ENCODE measurements at regions of chr7 and their contacts with region 1.

Region 1: GRCh38 chr7:44606450-44607254 is at the start of gene OGDH:
- DNase-seq: peak; percentile 100
- H3K4me3 Mint-ChIP-seq: peak within 1 kb of the TSS; percentile 82
- H3K27ac Mint-ChIP-seq: peak within 1 kb of the TSS; percentile 98
- H3K4me1 Mint-ChIP-seq: peaks cover 36% of the 10 kb centered on the region
- H3K27me3 Mint-ChIP-seq: no peaks in the 10 kb centered on the region
- total RNA-seq, gene OGDH: 103 to 105 TPM

Region 2: DNA sequence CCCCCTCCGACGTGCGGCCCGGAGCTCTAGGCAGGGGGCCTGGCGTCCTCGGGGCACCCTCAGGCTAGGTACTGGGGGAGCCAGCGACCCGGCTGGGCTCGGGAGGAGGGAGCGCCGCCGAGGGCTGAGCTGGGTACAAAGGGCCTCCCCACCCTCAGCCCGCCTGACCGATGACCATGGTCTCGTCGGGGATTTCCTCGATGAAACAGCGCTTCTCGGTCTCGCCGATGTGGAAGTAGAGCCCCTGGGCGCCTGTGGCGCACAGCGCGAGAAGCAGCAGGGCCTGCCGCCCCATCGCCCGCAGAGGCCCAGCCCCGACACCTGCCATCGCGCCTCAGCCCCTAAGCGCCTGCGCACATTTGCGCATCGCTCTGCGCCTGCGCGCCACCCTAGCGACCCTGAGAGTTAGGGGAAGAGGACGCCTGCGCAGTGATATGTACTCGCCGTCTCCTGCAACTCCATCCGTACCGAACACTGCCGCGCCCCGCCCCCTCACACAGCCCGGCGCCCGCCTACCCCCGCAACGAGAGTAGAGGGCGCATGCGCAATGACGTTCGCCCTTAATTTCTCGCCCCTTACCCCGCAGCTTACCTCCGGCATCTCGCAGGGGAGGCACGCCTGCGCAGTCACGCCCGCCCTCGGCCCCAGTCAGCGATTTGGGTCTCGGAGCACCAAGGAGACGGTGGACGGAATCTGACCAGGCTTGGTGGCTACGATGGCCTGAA is 24.6 kb before region 1 on chr7 and contains the start of gene TMED4:
- CTCF ChIA-PET with region 1: interaction called, 3 read pairs
- POLR2A ChIA-PET with region 1: interaction called, 20 read pairs
- intact Hi-C with region 1: loop called (anchors 1 kb)
- DNase-seq: peak; percentile 100
- H3K4me3 Mint-ChIP-seq: peak within 1 kb of the TSS; percentile 91
- H3K27ac Mint-ChIP-seq: peak within 1 kb of the TSS; percentile 91
- H3K4me1 Mint-ChIP-seq: peaks cover 29% of the 10 kb centered on the region
- H3K27me3 Mint-ChIP-seq: peaks cover 3% of the 10 kb centered on the region
- total RNA-seq, gene TMED4: 74.8 to 79.1 TPM

Region 3: GRCh38 chr7:44622307-44623151 is 15.9 kb after region 1 on chr7:
- CTCF ChIA-PET with region 1: interaction called, 4 read pairs
- POLR2A ChIA-PET with region 1: interaction called, 21 read pairs
- intact Hi-C with region 1: loop called (anchors 1 kb)
- DNase-seq: peak; percentile 74
- H3K4me3 Mint-ChIP-seq: peak overlapping the region; percentile 69
- H3K27ac Mint-ChIP-seq: peak overlapping the region; percentile 93
- H3K4me1 Mint-ChIP-seq: peaks cover 92% of the 10 kb centered on the region
- H3K27me3 Mint-ChIP-seq: no peaks in the 10 kb centered on the region

Region 4: GRCh38 chr7:44633254-44634186 is 26.9 kb after region 1 on chr7:
- CTCF ChIA-PET with region 1: interaction called, 10 read pairs
- POLR2A ChIA-PET with region 1: interaction called, 60 read pairs
- intact Hi-C with region 1: loop called (anchors 1 kb)
- DNase-seq: peak; percentile 84
- H3K4me3 Mint-ChIP-seq: peak overlapping the region; percentile 53
- H3K27ac Mint-ChIP-seq: peak overlapping the region; percentile 96
- H3K4me1 Mint-ChIP-seq: peaks cover 97% of the 10 kb centered on the region
- H3K27me3 Mint-ChIP-seq: no peaks in the 10 kb centered on the region

Region 5: DNA sequence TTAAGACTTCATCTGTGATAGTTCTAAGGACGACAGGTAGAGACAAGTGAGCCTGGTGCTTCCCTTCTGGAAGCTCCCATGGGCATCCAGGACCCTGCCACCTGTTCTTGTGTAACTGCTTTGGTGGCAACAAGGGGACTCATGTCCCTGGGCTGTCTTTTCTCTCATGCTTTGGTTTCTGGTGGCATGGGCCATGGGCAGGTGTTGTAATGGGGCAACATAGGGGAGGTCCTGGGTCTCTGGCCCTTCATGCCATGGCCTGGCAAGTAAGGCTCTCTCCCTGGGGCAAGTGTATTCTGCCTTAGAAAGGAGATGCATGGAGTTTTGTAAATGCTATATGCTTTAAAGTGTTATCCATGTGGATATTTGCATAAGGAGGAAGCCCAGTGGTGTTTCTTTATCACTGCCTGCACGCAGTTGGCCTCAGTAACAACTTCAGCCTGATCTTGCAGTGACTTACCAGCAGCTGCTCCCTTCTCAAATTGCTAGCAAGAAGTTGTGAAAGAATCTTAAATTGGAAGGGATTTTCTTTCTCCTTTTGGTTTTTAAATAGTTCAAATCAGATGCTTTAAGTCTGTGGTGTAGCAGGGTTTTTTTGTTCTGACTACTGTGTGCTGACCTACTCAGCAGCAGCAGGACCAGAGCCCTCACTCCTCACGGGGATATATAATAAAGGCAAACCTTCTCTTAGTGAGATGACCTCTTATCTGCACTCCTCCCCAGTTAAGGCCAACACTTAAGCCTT is 39.7 kb after region 1 on chr7:
- CTCF ChIA-PET with region 1: no interaction called
- POLR2A ChIA-PET with region 1: no interaction called
- intact Hi-C with region 1: no loop called
- DNase-seq: no peak
- H3K4me3 Mint-ChIP-seq: no peak overlapping the region
- H3K27ac Mint-ChIP-seq: no peak overlapping the region
- H3K4me1 Mint-ChIP-seq: peaks cover 17% of the 10 kb centered on the region
- H3K27me3 Mint-ChIP-seq: no peaks in the 10 kb centered on the region

Region 6: DNA sequence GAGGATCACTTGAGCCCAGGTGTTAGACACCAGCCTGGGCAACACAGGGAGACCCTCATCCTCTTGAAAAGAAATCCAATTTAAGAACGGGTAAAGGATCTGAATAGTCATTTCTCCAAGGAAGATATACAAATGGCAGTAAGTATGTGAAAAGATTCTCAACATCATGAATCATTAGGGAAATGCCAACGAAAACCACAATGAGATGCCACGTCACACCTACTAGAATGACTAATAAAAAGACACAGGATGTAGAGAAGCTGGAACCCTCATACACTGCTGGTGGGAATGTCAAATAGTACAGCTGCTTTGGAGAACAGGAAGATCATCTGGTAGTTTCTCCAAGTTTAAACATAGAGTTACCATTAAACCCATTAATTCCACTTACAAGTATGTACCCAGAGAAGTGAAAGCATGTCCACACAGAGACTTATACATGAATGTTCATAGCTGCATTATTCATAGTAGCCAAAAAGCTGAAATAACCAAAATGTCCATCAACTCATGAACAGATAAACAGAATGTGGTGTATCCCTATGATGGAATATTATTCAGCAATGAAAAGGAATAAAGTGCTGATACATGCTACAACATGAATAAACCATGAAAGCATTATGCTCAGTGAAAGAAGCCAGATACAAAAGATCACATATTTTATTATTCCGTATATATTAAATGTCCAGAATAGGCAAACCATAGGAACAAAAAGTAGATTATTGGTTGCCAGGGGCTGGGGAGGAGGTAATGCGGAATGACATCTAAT is 128.9 kb after region 1 on chr7:
- CTCF ChIA-PET with region 1: no interaction called
- POLR2A ChIA-PET with region 1: no interaction called
- intact Hi-C with region 1: loop called (anchors 1 kb)
- DNase-seq: peak; percentile 62
- H3K4me3 Mint-ChIP-seq: peak overlapping the region; percentile 4
- H3K27ac Mint-ChIP-seq: peak overlapping the region; percentile 73
- H3K4me1 Mint-ChIP-seq: peaks cover 19% of the 10 kb centered on the region
- H3K27me3 Mint-ChIP-seq: no peaks in the 10 kb centered on the region

Region 7: DNA sequence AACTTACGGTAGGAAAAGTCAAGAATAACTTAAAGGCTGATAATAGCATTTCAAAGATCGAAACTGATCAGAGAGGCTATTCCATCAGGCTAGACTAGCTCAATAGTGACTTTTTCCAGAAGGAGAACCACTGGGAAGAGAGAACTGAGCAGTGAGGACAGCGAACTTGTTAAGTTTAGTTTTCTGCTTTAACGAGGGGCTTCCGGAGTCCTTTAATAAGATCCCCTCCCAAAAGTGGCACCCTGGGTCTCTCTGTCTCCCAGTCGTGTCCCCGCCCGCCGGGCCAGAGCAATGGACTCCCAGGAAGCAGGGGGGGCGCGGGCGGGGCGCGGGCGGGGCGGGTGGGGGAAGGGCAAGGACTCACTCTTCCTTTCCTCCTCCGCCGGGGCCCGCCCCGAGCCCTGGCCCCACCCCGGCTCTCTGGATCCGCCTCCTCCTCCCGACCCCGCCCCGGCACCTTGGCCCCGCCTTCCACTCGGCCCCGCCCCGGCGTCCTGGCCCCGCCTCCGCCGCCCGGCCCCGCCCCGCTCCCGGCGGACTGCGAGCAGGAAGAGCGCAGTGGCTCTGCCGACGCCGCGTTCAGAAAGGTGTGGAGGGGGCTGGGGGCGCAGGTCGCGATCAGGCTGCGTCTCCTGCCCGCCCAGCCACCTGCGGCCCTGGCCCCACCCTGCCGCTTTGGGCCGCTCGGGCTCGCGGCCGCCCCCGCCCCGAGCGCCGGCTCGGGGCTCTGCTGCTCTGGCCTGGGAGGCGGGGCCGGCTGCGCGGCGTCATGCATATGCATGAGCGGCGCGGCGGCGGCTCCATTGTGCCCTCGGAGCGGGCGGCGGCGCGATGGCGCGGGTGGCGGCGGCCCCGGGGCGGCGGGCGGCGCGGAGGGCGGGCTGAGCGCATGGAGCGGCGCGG is 141.6 kb after region 1 on chr7 and contains the start of gene ZMIZ2:
- CTCF ChIA-PET with region 1: interaction called, 3 read pairs
- POLR2A ChIA-PET with region 1: interaction called, 24 read pairs
- intact Hi-C with region 1: loop called (anchors 1 kb)
- DNase-seq: peak; percentile 93
- H3K4me3 Mint-ChIP-seq: peak within 1 kb of the TSS; percentile 81
- H3K27ac Mint-ChIP-seq: peak within 1 kb of the TSS; percentile 87
- H3K4me1 Mint-ChIP-seq: peaks cover 39% of the 10 kb centered on the region
- H3K27me3 Mint-ChIP-seq: no peaks in the 10 kb centered on the region
- total RNA-seq, gene ZMIZ2: 84.7 to 92.3 TPM

Region 8: DNA sequence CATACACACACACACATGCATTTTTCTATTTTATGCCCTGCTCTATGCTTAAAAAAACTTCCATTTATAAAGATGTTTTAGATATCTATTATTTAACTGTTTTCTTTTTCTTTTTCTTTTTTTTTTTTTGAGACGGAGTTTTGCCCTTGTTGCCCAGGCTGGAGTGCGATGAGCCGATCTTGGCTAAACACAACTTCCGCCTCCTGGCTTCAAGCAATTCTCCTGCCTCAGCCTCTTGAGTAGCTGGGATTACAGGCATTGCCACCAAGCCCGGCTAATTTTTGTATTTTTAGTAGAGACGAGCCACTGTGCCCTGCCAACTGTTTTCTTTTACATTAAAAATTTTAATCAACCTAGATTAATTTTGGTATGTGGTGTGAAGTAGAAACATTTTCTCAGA is 324.3 kb after region 1 on chr7:
- CTCF ChIA-PET with region 1: no interaction called
- POLR2A ChIA-PET with region 1: no interaction called
- intact Hi-C with region 1: no loop called
- DNase-seq: no peak
- H3K4me3 Mint-ChIP-seq: no peak overlapping the region
- H3K27ac Mint-ChIP-seq: no peak overlapping the region
- H3K4me1 Mint-ChIP-seq: no peaks in the 10 kb centered on the region
- H3K27me3 Mint-ChIP-seq: no peaks in the 10 kb centered on the region

Measured in activated CD4-positive, alpha-beta memory T cell treated with anti-CD3 and anti-CD28 coated beads for 36 hours (primary cell).